GM10248 (cell line): ENCODE measurements at regions of chr2 and their contacts with region 1.

Region 1: DNA sequence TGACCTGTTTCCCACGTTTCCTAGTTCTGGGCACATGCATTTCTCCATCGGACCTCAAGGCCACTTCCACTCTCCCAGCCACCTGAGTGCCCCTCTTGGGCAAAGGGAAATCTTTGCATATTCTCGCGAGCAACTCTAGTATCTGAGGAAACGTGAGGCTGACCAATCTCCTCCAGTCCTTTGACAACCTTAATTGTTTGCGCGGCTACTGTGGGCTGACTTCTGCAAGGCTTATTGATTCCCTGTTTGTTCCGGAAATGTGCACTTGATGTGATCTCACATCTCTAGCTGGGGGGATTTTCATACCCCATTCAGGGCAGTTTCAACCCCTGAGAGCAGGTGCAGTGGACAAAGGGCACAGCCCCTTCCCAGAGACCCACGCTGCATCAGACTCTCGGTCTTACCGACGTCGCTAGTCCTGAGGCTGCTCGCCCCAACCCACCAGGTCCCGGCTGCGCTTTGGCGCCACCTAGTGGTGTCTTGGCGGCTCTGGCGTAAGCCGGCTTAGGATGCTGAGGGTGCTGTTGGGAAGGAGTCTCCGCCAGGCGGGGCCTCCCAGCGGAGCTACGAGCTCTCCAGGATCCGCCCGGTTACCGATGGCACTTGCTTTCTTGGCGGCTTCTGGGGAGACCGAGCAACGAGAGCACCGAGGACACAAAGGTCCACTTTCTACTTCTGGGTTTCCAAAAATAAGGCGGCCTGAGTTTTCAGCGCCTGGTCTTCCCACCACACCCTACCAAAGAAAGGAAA is 24.8 kb upstream of the SPR start:
- DNase-seq: peak; percentile 90
- CTCF ChIP-seq: peak; percentile 95

Region 2: GRCh38 chr2:72300147-72300684 is 562.2 kb before region 1 on chr2:
- CTCF ChIA-PET with region 1: no interaction called
- POLR2A ChIA-PET with region 1: no interaction called
- DNase-seq: no peak
- CTCF ChIP-seq: no peak

Region 3: DNA sequence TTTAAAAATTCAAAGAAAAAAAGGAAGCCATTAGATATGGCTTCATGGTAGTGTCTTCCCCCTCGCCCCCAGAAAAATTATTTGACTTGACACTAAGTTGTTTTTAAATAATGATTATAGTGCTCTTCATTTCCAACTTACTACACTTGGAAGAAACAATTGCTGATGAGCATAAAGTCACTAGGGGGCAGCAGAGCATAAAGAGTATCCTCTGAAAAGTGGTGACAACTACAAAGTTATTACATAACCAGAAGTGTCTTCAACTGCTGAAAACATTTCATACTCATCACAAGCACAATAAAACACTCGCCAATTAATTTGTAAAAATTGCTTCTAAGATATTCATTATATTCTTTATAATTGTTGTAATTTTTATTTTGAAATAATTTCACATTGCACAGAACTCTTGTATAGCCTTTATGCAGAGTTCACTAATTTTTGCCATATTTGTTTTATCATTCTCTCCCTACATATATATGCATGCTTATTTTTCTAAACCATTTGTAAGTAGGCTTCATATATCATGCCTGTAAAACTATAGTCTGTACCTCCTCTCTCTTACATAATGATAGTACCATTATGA is 91.4 kb before region 1 on chr2:
- CTCF ChIA-PET with region 1: interaction called, 47 read pairs
- POLR2A ChIA-PET with region 1: no interaction called
- DNase-seq: peak; percentile 69
- CTCF ChIP-seq: peak; percentile 70

Region 4: DNA sequence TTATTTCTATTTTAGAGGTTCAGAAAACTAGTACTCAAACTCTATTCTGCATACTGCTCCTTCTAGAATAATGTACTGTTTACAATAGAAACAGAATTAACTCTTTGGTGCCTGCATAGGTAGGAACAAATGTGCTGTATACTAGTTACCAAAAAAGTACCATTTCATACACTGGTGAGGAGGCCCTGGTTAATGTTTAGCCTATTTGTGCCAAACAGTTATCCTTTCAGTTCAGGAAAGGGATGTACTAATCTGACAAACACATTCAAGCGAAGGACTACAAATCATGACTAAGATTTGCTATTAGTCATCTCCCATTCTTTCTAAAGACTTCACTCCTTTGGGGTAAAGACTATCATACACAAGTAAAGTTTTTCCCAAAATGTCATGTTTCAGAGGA is 84.0 kb before region 1 on chr2:
- CTCF ChIA-PET with region 1: interaction called, 47 read pairs
- POLR2A ChIA-PET with region 1: no interaction called
- DNase-seq: no peak
- CTCF ChIP-seq: no peak

Region 5: GRCh38 chr2:72833084-72833709 is 29.2 kb before region 1 on chr2:
- CTCF ChIA-PET with region 1: interaction called, 10 read pairs
- POLR2A ChIA-PET with region 1: interaction called, 4 read pairs
- DNase-seq: no peak
- CTCF ChIP-seq: no peak

Region 6: DNA sequence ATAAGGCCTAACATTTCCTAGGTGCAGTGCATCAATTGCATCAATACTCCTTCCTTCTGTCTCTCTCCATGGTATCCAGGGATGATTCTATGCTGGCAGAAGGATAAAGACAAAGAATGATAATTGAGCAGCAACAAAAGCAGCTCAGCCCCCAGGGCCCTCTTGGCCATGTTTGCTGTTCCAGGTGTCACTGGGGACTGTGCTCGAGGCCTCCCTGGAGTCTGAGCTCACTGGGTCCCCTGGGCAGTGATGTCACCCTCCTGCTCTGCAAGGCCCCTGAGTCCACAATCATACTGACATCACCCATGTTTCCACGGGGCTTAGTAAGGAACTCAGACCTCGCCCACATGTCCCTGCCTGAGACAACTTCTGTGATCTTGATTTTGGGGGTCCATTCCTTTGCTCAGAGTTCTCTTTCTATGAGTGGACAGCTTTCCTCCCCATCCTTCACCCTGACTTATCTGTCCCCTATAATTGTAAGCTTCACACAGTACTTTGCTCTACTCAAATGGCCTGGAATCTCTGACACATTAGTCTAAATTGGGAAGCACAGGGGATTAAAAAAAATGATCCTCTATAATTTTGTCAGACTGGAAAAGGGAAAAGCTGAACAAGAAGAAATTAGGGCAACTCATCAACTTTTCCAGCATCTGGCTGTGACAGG is 20.8 kb before region 1 on chr2:
- CTCF ChIA-PET with region 1: interaction called, 11 read pairs
- POLR2A ChIA-PET with region 1: no interaction called
- DNase-seq: no peak
- CTCF ChIP-seq: no peak

Region 7: GRCh38 chr2:72851321-72851720 is 11.1 kb before region 1 on chr2:
- CTCF ChIA-PET with region 1: interaction called, 17 read pairs
- POLR2A ChIA-PET with region 1: no interaction called
- DNase-seq: no peak
- CTCF ChIP-seq: no peak

Region 8: GRCh38 chr2:72911256-72911655 is 48.8 kb after region 1 on chr2:
- CTCF ChIA-PET with region 1: no interaction called
- POLR2A ChIA-PET with region 1: no interaction called
- DNase-seq: no peak
- CTCF ChIP-seq: no peak